ENCODE measurements at regions of chr11 and their contacts with region 1.

Region 1: GRCh38 chr11:64566042-64566914 is 24.7 kb upstream of the SLC22A12 start:
- DNase-seq: no peak
- ATAC-seq: no peak
- H3K4me3 ChIP-seq: no peak overlapping the region
- H3K27ac ChIP-seq: no peak overlapping the region
- H3K4me1 ChIP-seq: no peaks in the 10 kb centered on the region
- H3K27me3 ChIP-seq: no peaks in the 10 kb centered on the region
- CTCF ChIP-seq: no peak
- EP300 ChIP-seq: no peak
- POLR2A ChIP-seq: no peak
- RAD21 ChIP-seq: no peak

Region 2: DNA sequence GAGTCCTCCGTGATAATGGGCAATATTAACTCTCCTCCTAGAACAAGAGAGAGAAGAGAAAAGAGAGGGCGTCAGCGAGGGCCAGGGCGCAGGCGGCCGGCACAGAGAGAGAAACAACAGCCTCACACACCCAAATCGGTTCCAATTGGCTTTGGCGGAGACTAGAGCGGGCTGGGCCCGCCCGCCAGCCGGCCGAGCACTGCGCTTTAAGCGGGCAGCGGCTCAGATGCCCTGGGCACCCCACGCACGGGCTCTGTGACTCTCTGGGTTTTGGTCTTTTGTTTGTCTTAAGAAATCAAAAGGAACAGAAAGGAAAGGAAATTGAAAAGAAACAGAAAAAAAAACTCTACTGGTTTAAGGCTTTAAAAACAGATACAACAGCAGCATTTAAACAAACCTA is 41.8 kb after region 1 on chr11:
- CTCF ChIA-PET with region 1: no interaction called
- POLR2A ChIA-PET with region 1: no interaction called
- RAD21 ChIA-PET with region 1: no interaction called
- SMC1A ChIA-PET with region 1: no interaction called
- in situ Hi-C with region 1: no loop called
- intact Hi-C with region 1: no loop called
- DNase-seq: no peak
- ATAC-seq: no peak
- H3K4me3 ChIP-seq: no peak overlapping the region
- H3K27ac ChIP-seq: no peak overlapping the region
- H3K4me1 ChIP-seq: no peaks in the 10 kb centered on the region
- H3K27me3 ChIP-seq: no peaks in the 10 kb centered on the region
- CTCF ChIP-seq: no peak
- EP300 ChIP-seq: no peak
- POLR2A ChIP-seq: no peak
- RAD21 ChIP-seq: no peak

Region 3: GRCh38 chr11:64619811-64620380 is 53.6 kb after region 1 on chr11:
- CTCF ChIA-PET with region 1: no interaction called
- POLR2A ChIA-PET with region 1: no interaction called
- RAD21 ChIA-PET with region 1: no interaction called
- SMC1A ChIA-PET with region 1: no interaction called
- in situ Hi-C with region 1: loop called (anchors 5 kb)
- intact Hi-C with region 1: no loop called
- DNase-seq: no peak
- ATAC-seq: peak; percentile 43
- H3K4me3 ChIP-seq: no peak overlapping the region
- H3K27ac ChIP-seq: no peak overlapping the region
- H3K4me1 ChIP-seq: peaks cover 1% of the 10 kb centered on the region
- H3K27me3 ChIP-seq: no peaks in the 10 kb centered on the region
- CTCF ChIP-seq: no peak
- EP300 ChIP-seq: no peak
- POLR2A ChIP-seq: no peak
- RAD21 ChIP-seq: no peak

Region 4: DNA sequence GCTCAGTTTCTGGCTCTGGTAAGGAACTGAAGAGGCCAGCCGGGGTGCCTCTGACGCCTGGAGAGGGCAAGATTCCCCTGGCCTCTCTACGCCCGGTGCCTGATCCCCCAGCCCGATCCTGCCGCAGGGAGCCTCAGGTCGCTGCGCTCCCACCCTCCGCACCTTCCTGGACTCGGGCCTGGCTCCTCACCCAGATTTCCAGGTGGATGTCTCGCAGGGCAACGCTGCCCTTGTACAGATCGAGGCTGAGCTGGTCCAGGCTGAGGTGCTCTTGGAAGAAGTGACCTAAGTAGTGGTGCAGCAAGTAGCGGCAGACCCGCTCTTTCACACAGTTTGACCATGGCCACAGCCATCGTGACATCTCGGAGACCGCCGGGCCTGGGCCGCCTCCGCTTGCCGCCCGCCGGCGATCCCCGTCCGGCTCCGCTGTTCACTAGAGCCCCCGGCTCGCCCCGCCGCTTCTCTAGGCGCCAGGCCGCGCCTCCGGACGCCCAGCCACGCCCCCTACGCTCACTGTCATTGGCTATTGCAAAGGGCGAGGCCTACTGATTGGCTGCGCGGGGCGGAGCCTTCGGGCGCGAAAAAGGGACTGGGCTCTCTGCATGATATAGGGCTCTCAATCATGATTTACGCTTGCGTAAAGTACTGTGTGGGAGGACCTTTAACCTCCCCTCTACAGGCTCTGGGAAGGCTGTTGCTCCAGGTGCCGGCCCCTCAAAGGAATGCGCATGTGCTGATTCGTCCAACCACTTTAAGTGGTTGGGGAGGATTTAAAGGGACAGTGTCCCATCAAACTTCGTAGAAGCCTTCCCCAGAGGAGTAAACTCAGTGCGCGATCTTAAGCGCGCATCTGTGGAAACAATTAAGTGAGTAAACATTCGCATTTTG is 350.7 kb after region 1 on chr11 and contains the start of gene ATG2A:
- CTCF ChIA-PET with region 1: no interaction called
- POLR2A ChIA-PET with region 1: no interaction called
- RAD21 ChIA-PET with region 1: no interaction called
- SMC1A ChIA-PET with region 1: no interaction called
- in situ Hi-C with region 1: no loop called
- intact Hi-C with region 1: no loop called
- DNase-seq: peak; percentile 99
- ATAC-seq: peak; percentile 98
- H3K4me3 ChIP-seq: peak within 1 kb of the TSS; percentile 86
- H3K27ac ChIP-seq: peak within 1 kb of the TSS; percentile 91
- H3K4me1 ChIP-seq: peaks cover 6% of the 10 kb centered on the region
- H3K27me3 ChIP-seq: no peaks in the 10 kb centered on the region
- CTCF ChIP-seq: no peak
- EP300 ChIP-seq: no peak
- POLR2A ChIP-seq: peak; percentile 86
- RAD21 ChIP-seq: no peak
- polyA plus RNA-seq, gene ATG2A: 0.08 to 0.51 TPM